Activated T-helper 1 cell treated with anti-CD3 and anti-CD28 coated beads, Interleukin-12 subunit alpha, Interleukin-12 subunit beta, Interleukin-2, Interleukin-4 antibody, amounts not matched to agents 30 ng/mL and 10 ng/mL and 1 ng/mL, durations not matched to agents 14 hours and 24 hours and 36 hours (primary cell): ENCODE measurements at regions of chr10 and their contacts with region 1.

Region 1: GRCh38 chr10:68752711-68753350 is 31.8 kb downstream of the CCAR1 start:
- DNase-seq: no peak
- H3K4me3 Mint-ChIP-seq: no peak overlapping the region
- H3K27ac Mint-ChIP-seq: no peak overlapping the region
- H3K4me1 Mint-ChIP-seq: no peaks in the 10 kb centered on the region
- H3K27me3 Mint-ChIP-seq: no peaks in the 10 kb centered on the region

Region 2: GRCh38 chr10:68348265-68348741 is 404.5 kb before region 1 on chr10:
- intact Hi-C with region 1: loop called (anchors 10 kb)
- DNase-seq: peak; percentile 10
- H3K4me3 Mint-ChIP-seq: no peak overlapping the region
- H3K27ac Mint-ChIP-seq: peak overlapping the region; percentile 13
- H3K4me1 Mint-ChIP-seq: peaks cover 17% of the 10 kb centered on the region
- H3K27me3 Mint-ChIP-seq: no peaks in the 10 kb centered on the region